ENCODE measurements at regions of chr13 and their contacts with region 1.

Region 1: GRCh38 chr13:76991796-76992547 is at the start of gene CLN5:
- DNase-seq: peak; percentile 95
- ATAC-seq: peak; percentile 95
- H3K4me3 Mint-ChIP-seq: peak within 1 kb of the TSS; percentile 98
- H3K27ac Mint-ChIP-seq: peak within 1 kb of the TSS; percentile 100
- H3K4me1 Mint-ChIP-seq: peaks cover 31% of the 10 kb centered on the region
- H3K27me3 Mint-ChIP-seq: peaks cover 21% of the 10 kb centered on the region
- total RNA-seq, gene CLN5: 15.4 to 18.9 TPM

Region 2: DNA sequence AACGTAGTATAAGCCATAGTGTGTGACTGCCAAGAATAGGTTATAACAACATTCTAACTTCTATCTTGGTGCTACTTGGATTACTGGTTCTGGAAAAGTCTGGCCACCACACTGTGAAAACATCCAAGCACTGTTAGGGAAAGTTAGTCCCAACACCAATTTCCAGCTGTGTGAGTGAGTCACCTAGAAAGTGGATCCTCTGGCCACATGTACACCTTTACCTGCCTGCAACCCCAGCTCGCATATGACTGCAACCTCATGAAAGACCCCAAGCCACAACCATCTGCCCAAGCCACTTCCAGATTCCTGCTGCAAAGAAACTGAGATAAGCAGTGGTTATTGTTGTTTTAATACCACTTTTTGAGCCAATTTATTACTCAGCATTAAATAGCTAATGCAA is 510.2 kb before region 1 on chr13:
- POLR2A ChIA-PET with region 1: no interaction called
- DNase-seq: no peak
- ATAC-seq: no peak
- H3K4me3 Mint-ChIP-seq: no peak overlapping the region
- H3K27ac Mint-ChIP-seq: no peak overlapping the region
- H3K4me1 Mint-ChIP-seq: no peaks in the 10 kb centered on the region
- H3K27me3 Mint-ChIP-seq: no peaks in the 10 kb centered on the region

Region 3: DNA sequence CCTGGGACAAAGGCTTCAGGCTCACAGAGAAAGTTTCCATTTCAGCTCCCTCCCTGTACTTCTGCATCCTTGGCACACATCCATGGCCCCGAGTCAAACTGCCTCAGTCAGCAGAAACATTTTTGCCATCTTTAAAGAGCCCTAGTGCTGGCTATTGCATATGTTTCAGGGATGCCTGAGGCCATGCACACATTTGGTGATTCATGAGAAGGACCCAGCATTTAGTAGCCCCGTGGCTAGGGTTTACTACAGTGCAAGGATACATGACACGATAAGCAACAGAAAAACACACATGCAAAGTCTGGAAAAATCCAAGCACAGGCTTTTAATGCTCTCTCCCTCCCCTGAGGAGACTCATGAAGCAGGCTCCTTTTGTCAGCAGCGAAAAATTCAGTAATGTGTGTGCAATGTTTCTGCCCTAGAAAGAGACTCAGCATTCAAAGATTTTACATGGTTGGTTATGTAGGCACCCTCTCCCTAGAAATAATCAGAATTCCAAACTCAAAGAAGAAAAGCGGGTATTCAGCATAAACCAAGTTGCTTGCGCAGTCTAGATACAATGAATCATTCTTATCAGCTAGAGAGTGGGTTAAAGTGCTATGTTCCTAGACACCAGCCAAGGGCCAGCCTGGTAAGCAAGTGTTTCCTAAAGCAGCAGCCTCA is 26.1 kb before region 1 on chr13:
- POLR2A ChIA-PET with region 1: no interaction called
- DNase-seq: no peak
- ATAC-seq: no peak
- H3K4me3 Mint-ChIP-seq: no peak overlapping the region
- H3K27ac Mint-ChIP-seq: no peak overlapping the region
- H3K4me1 Mint-ChIP-seq: peaks cover 2% of the 10 kb centered on the region
- H3K27me3 Mint-ChIP-seq: peaks cover 9% of the 10 kb centered on the region

Region 4: GRCh38 chr13:76980075-76980718 is 11.8 kb before region 1 on chr13:
- POLR2A ChIA-PET with region 1: interaction called, 20 read pairs
- DNase-seq: peak; percentile 96
- ATAC-seq: peak; percentile 100
- H3K4me3 Mint-ChIP-seq: peak overlapping the region; percentile 62
- H3K27ac Mint-ChIP-seq: no peak overlapping the region
- H3K4me1 Mint-ChIP-seq: peaks cover 4% of the 10 kb centered on the region
- H3K27me3 Mint-ChIP-seq: peaks cover 52% of the 10 kb centered on the region

Region 5: GRCh38 chr13:77026818-77027585 is 35.0 kb after region 1 on chr13 and contains the start of gene FBXL3:
- POLR2A ChIA-PET with region 1: interaction called, 78 read pairs
- DNase-seq: peak; percentile 86
- ATAC-seq: peak; percentile 67
- H3K4me3 Mint-ChIP-seq: peak within 1 kb of the TSS; percentile 99
- H3K27ac Mint-ChIP-seq: peak within 1 kb of the TSS; percentile 97
- H3K4me1 Mint-ChIP-seq: peaks cover 35% of the 10 kb centered on the region
- H3K27me3 Mint-ChIP-seq: peaks cover 3% of the 10 kb centered on the region
- total RNA-seq, gene FBXL3: 46.1 to 47.7 TPM

Region 6: GRCh38 chr13:77056382-77056781 is 64.4 kb after region 1 on chr13:
- POLR2A ChIA-PET with region 1: no interaction called
- DNase-seq: no peak
- ATAC-seq: no peak
- H3K4me3 Mint-ChIP-seq: no peak overlapping the region
- H3K27ac Mint-ChIP-seq: no peak overlapping the region
- H3K4me1 Mint-ChIP-seq: no peaks in the 10 kb centered on the region
- H3K27me3 Mint-ChIP-seq: no peaks in the 10 kb centered on the region

Region 7: GRCh38 chr13:77274126-77274525 is 282.2 kb after region 1 on chr13:
- POLR2A ChIA-PET with region 1: no interaction called
- DNase-seq: no peak
- ATAC-seq: no peak
- H3K4me3 Mint-ChIP-seq: no peak overlapping the region
- H3K27ac Mint-ChIP-seq: no peak overlapping the region
- H3K4me1 Mint-ChIP-seq: peaks cover 2% of the 10 kb centered on the region
- H3K27me3 Mint-ChIP-seq: no peaks in the 10 kb centered on the region

Measured in activated naive CD8-positive, alpha-beta T cell treated with anti-CD3 and anti-CD28 coated beads, Interleukin-2, amount 10 ng/mL, durations not matched to agents 7 days and 5 days (primary cell).